ENCODE measurements at regions of chr7 and their contacts with region 1.

Region 1: GRCh38 chr7:27921081-27921836 is 181.3 kb downstream of the TAX1BP1 start:
- DNase-seq: peak; percentile 73
- H3K4me3 ChIP-seq: no peak overlapping the region
- H3K27ac ChIP-seq: no peak overlapping the region
- H3K4me1 ChIP-seq: no peaks in the 10 kb centered on the region
- H3K27me3 ChIP-seq: no peaks in the 10 kb centered on the region
- CTCF ChIP-seq: peak; percentile 40

Region 2: GRCh38 chr7:27235387-27236311 is 685.6 kb before region 1 on chr7:
- intact Hi-C with region 1: loop called (anchors 10 kb)
- DNase-seq: peak; percentile 75
- H3K4me3 ChIP-seq: peak overlapping the region; percentile 41
- H3K27ac ChIP-seq: no peak overlapping the region
- H3K4me1 ChIP-seq: no peaks in the 10 kb centered on the region
- H3K27me3 ChIP-seq: peaks cover 22% of the 10 kb centered on the region
- CTCF ChIP-seq: peak; percentile 45

Region 3: GRCh38 chr7:27586825-27587224 is 334.4 kb before region 1 on chr7:
- intact Hi-C with region 1: loop called (anchors 10 kb)
- DNase-seq: peak; percentile 34
- H3K4me3 ChIP-seq: no peak overlapping the region
- H3K27ac ChIP-seq: no peak overlapping the region
- H3K4me1 ChIP-seq: no peaks in the 10 kb centered on the region
- H3K27me3 ChIP-seq: no peaks in the 10 kb centered on the region
- CTCF ChIP-seq: no peak

Region 4: DNA sequence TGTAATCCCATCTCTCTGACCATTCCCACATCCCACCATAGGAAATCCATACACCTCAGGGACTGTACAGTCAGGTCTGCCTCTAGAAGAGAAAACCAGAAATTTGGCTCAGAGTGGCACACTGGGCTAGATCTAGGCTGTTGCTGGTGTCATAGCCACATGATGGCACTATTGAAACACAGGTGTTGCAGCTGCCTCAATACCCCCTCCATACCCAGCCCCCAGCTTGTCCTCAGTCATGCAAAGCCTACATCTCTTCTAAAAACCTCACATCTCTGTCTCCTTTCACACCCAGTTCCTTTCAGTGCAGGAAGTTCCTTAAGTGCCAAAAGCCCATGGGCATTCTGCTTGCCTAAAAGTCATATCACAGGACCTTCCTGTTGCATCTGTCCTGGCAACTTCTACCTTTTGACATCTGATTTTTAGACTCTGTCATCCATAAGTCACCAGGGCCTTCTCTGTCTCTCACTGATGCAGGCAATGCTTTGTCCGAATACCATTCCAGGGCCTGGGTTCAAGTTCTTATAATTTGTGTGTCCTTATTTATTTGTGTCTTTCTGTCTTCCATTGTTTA is 231.6 kb before region 1 on chr7:
- intact Hi-C with region 1: loop called (anchors 10 kb)
- DNase-seq: peak; percentile 25
- H3K4me3 ChIP-seq: no peak overlapping the region
- H3K27ac ChIP-seq: no peak overlapping the region
- H3K4me1 ChIP-seq: no peaks in the 10 kb centered on the region
- H3K27me3 ChIP-seq: no peaks in the 10 kb centered on the region
- CTCF ChIP-seq: peak; percentile 32

Region 5: GRCh38 chr7:27784393-27785053 is 136.7 kb before region 1 on chr7:
- intact Hi-C with region 1: loop called (anchors 10 kb)
- DNase-seq: peak; percentile 27
- H3K4me3 ChIP-seq: no peak overlapping the region
- H3K27ac ChIP-seq: no peak overlapping the region
- H3K4me1 ChIP-seq: no peaks in the 10 kb centered on the region
- H3K27me3 ChIP-seq: no peaks in the 10 kb centered on the region
- CTCF ChIP-seq: peak; percentile 43

Region 6: DNA sequence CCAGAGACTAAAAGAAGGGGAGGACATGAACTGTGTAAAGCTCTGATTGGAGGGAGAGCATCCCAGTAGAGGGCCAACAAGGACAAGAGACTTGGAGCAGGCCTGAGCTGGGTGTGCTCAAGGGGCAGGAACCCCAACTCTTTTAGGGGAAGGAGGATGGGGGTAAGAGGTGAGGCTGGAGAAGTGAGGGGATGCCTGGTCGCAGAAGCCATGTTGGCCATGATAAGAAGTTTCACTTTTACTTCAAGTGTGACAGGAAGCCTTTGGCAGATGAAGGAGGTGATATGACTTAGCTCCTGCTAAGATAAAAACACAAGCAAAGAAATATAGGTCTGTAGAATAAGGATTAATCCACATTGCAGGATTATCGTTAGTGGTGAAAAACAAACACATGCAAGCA is 51.0 kb after region 1 on chr7:
- intact Hi-C with region 1: no loop called
- DNase-seq: no peak
- H3K4me3 ChIP-seq: no peak overlapping the region
- H3K27ac ChIP-seq: no peak overlapping the region
- H3K4me1 ChIP-seq: no peaks in the 10 kb centered on the region
- H3K27me3 ChIP-seq: no peaks in the 10 kb centered on the region
- CTCF ChIP-seq: no peak

Region 7: GRCh38 chr7:28020302-28020940 is 99.2 kb after region 1 on chr7:
- intact Hi-C with region 1: loop called (anchors 5 kb)
- DNase-seq: peak; percentile 67
- H3K4me3 ChIP-seq: no peak overlapping the region
- H3K27ac ChIP-seq: no peak overlapping the region
- H3K4me1 ChIP-seq: no peaks in the 10 kb centered on the region
- H3K27me3 ChIP-seq: no peaks in the 10 kb centered on the region
- CTCF ChIP-seq: peak; percentile 82

Region 8: DNA sequence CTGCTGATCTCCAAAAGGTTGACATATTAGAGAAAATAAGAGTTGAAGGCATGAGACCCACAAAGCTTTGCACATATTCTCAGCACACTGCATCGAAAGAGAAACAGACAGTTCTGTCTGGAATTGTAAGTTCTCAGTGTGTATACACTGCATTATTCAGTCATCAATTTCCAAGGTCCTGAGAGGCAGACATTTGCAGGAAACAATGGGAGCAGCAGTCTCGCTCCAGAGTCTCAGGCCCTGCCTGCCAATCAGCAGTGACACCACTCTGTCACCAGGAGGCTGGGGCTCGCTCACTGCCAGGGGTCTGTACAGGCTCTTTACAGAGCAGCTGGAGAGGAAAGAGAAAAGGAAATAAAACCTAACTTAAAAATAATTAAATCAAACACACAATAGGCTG is 223.0 kb after region 1 on chr7:
- intact Hi-C with region 1: no loop called
- DNase-seq: no peak
- H3K4me3 ChIP-seq: no peak overlapping the region
- H3K27ac ChIP-seq: no peak overlapping the region
- H3K4me1 ChIP-seq: no peaks in the 10 kb centered on the region
- H3K27me3 ChIP-seq: no peaks in the 10 kb centered on the region
- CTCF ChIP-seq: no peak